Natural killer cell (primary cell): ENCODE measurements at regions of chr19 and their contacts with region 1.

Region 1: DNA sequence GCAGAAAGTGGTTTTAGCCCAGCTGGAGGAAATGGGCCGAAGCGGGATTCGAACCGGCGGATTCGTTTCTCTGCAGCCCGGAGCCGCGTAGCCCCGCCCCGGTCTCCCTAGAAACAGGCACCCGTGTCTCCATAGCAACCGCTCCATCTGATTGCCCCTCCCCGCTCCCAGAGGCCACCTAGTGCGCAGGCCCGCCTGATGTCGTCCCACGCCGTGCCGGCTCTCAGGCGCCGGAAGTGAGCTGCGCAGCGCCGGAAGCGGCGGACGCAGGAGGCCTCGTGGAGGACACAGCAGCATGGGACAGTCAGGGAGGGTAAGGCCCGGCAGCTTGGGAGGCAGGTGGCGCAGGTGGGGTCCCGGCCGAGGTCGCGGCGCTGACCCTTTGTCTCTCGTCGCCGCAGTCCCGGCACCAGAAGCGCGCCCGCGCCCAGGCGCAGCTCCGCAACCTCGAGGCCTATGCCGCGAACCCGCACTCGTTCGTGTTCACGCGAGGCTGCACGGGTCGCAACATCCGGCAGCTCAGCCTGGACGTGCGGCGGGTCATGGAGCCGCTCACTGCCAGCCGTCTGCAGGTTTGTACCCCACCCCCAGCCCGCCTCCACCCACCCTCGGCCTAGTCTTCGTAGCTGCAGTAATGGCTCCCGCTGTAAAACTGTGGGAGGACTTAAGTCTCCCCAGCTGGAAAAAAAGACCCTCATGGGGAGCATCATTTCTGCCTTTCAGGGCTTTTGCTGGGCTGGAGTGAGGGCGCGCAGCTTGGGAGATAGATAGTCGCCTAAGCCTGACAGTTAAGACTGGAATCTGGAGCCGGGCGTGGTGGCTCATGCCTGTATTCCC is at the start of gene PPAN:
- DNase-seq: peak; percentile 94 to 100
- ATAC-seq: peak; percentile 47 to 79 (median 58)
- H3K4me3 ChIP-seq: peak within 1 kb of the TSS; percentile 37
- H3K4me3 Mint-ChIP-seq: peak within 1 kb of the TSS; percentile 88
- H3K27ac ChIP-seq: peak within 1 kb of the TSS; percentile 100
- H3K27ac Mint-ChIP-seq: peak within 1 kb of the TSS; percentile 94 to 99
- H3K4me1 ChIP-seq: peaks cover 86% of the 10 kb centered on the region
- H3K4me1 Mint-ChIP-seq: peaks cover 51 to 70% of the 10 kb centered on the region in 2 donors
- H3K27me3 ChIP-seq: no peaks in the 10 kb centered on the region
- H3K27me3 Mint-ChIP-seq: no peaks in the 10 kb centered on the region
- CTCF ChIP-seq: no peak
- total RNA-seq, gene PPAN: 60.0 to 72.2 (median 69.2) TPM

Region 2: DNA sequence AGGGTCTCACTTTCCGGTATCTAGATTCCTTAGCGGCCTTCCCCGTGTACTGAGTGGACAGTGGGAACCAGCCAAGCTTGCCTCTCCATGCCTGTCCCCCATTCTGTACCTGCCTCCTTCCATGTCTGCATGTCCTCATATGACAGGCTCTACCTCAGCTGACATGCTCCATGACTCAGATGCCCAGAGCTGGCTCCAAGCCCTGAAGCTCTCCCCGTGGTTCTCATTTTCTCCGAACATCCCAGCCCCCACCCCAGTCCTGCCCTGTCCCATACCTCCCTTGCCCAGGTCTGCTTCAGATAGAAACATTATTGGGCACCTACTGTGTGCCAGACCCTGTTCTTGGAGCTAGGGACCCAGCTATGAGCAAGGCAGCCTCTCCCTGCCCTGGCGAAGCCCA is 37.3 kb before region 1 on chr19:
- intact Hi-C with region 1: no loop called
- DNase-seq: no peak
- ATAC-seq: no peak
- H3K4me3 ChIP-seq: no peak overlapping the region
- H3K4me3 Mint-ChIP-seq: no peak overlapping the region
- H3K27ac ChIP-seq: no peak overlapping the region
- H3K27ac Mint-ChIP-seq: no peak overlapping the region
- H3K4me1 ChIP-seq: peaks cover 6% of the 10 kb centered on the region
- H3K4me1 Mint-ChIP-seq: peaks cover 0 to 9% of the 10 kb centered on the region in 2 donors
- H3K27me3 ChIP-seq: no peaks in the 10 kb centered on the region
- H3K27me3 Mint-ChIP-seq: peaks cover 0 to 8% of the 10 kb centered on the region in 2 donors
- CTCF ChIP-seq: no peak

Region 3: DNA sequence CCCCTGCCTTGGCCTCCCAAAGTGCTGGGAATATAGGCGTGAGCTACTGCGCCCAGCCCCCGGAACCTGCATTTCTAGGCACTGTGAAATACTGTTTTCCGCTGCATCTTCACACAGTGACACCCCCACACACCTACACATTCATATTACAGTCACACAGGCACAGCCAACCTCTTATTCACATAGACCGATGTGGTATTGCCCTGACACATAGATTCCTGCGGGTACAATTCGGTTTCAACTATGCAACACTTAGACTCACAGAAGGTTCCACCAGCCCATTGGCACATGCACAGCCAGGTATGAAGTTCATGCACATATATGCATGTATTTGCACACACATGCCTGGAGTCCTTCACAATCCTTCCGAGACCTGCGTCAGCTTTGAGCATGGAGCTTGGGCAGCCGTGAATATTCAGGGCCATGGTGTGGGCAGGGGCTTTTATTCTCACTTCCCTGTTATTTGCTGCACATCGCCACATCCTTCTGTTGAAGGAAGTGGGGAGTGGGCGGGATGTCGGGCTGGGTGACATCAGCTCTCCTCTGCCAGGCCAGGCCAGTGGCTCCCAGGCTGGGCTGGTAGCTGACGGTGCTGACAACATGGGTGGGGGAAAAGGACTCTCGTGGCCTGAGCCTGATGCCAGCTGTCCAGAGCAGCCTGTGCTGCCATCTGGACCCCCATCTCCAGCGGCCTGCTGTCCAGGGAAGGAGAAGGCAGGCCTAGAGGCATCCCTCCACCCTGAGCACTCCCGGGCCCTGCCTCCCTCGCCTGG is 302.4 kb after region 1 on chr19:
- intact Hi-C with region 1: loop called (anchors 5 kb)
- DNase-seq: peak; percentile 64 to 75
- ATAC-seq: peak; percentile 46 to 69 (median 59)
- H3K4me3 ChIP-seq: no peak overlapping the region
- H3K4me3 Mint-ChIP-seq: peak overlapping the region; percentile 88
- H3K27ac ChIP-seq: peak overlapping the region; percentile 73
- H3K27ac Mint-ChIP-seq: peak overlapping the region; percentile 97 to 98
- H3K4me1 ChIP-seq: peaks cover 93% of the 10 kb centered on the region
- H3K4me1 Mint-ChIP-seq: peaks cover 66 to 81% of the 10 kb centered on the region in 2 donors
- H3K27me3 ChIP-seq: no peaks in the 10 kb centered on the region
- H3K27me3 Mint-ChIP-seq: no peaks in the 10 kb centered on the region
- CTCF ChIP-seq: no peak

Region 4: GRCh38 chr19:10424011-10424637 is 317.8 kb after region 1 on chr19:
- intact Hi-C with region 1: loop called (anchors 5 kb)
- DNase-seq: peak; percentile 69 to 81
- ATAC-seq: peak; percentile 14 to 28 (median 23)
- H3K4me3 ChIP-seq: peak overlapping the region; percentile 24
- H3K4me3 Mint-ChIP-seq: peak overlapping the region; percentile 88
- H3K27ac ChIP-seq: peak overlapping the region; percentile 69
- H3K27ac Mint-ChIP-seq: peak overlapping the region; percentile 95 to 96
- H3K4me1 ChIP-seq: peaks cover 87% of the 10 kb centered on the region
- H3K4me1 Mint-ChIP-seq: peaks cover 49 to 73% of the 10 kb centered on the region in 2 donors
- H3K27me3 ChIP-seq: peaks cover 29% of the 10 kb centered on the region
- H3K27me3 Mint-ChIP-seq: peaks cover 27% of the 10 kb centered on the region in 2 donors
- CTCF ChIP-seq: peak; percentile 91

Region 5: GRCh38 chr19:10517760-10518443 is 411.6 kb after region 1 on chr19:
- intact Hi-C with region 1: loop called (anchors 2 kb)
- DNase-seq: peak; percentile 61 to 74
- ATAC-seq: peak; percentile 20 to 33 (median 29)
- H3K4me3 ChIP-seq: peak overlapping the region; percentile 97
- H3K4me3 Mint-ChIP-seq: peak overlapping the region; percentile 81
- H3K27ac ChIP-seq: peak overlapping the region; percentile 89
- H3K27ac Mint-ChIP-seq: peak overlapping the region; percentile 86 to 91
- H3K4me1 ChIP-seq: peaks cover 80% of the 10 kb centered on the region
- H3K4me1 Mint-ChIP-seq: peaks cover 60 to 67% of the 10 kb centered on the region in 2 donors
- H3K27me3 ChIP-seq: peaks cover 2% of the 10 kb centered on the region
- H3K27me3 Mint-ChIP-seq: peaks cover 0 to 3% of the 10 kb centered on the region in 2 donors
- CTCF ChIP-seq: no peak